CD14-positive monocyte (primary cell): ENCODE measurements at regions of chr18 and their contacts with region 1.

Region 1: DNA sequence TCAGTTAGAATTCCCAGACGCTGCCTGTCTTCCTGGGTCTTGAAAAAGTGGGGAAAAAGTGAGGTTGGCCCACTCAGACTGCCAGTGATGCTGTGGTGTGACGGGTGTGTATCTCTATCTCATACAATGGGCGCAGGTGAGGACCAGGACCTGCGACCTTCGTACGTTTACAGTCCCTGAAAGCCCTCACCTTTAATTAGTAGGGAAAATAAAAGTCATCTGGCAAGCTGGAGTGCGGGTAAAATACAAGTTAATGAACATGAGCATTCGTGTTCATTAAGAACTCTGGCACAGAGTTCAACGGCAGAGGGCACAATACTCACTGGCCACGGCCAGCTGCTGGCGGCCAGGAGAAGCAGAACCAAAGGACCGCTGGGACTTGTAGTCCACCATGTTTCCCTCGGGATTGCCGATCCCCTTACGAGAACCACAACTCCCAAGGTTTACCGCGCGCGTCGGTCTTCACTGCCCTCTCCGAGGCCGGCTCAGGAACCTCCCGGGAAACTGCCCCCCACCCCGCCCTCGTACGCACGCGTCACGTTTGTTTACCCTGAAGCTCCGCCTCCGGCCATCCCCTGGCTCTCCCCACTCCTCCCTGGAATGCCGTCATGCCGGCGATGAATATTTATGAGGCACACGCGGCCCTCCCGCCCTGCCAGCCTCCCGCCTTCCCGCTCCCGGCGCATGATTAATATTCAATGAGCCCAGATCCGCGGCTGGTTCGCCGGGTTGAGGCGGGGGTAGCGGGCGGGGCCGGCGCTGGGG is 488 bp upstream of the PHLPP1 start:
- DNase-seq: peak; percentile 100
- H3K4me3 ChIP-seq: peak overlapping the region; percentile 68 to 78 (median 73)
- H3K4me3 Mint-ChIP-seq: peak overlapping the region; percentile 78 to 84
- H3K27ac ChIP-seq: peak overlapping the region; percentile 70 to 71
- H3K27ac Mint-ChIP-seq: peak overlapping the region; percentile 76 to 97 (median 91)
- H3K4me1 ChIP-seq: peaks cover 15 to 36% of the 10 kb centered on the region in 2 donors
- H3K4me1 Mint-ChIP-seq: peaks cover 33% of the 10 kb centered on the region
- H3K27me3 ChIP-seq: no peaks in the 10 kb centered on the region
- H3K27me3 Mint-ChIP-seq: peaks cover 0 to 5% (median 1%) of the 10 kb centered on the region in 3 donors
- CTCF ChIP-seq: peak; percentile 63

Region 2: GRCh38 chr18:62576845-62577512 is 137.9 kb before region 1 on chr18:
- intact Hi-C with region 1: no loop called
- DNase-seq: no peak
- H3K4me3 ChIP-seq: peak overlapping the region in 1 of 3 experiments; percentile 46
- H3K4me3 Mint-ChIP-seq: peak overlapping the region; percentile 49 to 76
- H3K27ac ChIP-seq: peak overlapping the region; percentile 42 to 71
- H3K27ac Mint-ChIP-seq: peak overlapping the region; percentile 39 to 89 (median 66)
- H3K4me1 ChIP-seq: peaks cover 10 to 13% of the 10 kb centered on the region in 2 donors
- H3K4me1 Mint-ChIP-seq: peaks cover 14% of the 10 kb centered on the region
- H3K27me3 ChIP-seq: no peaks in the 10 kb centered on the region
- H3K27me3 Mint-ChIP-seq: no peaks in the 10 kb centered on the region
- CTCF ChIP-seq: no peak

Region 3: DNA sequence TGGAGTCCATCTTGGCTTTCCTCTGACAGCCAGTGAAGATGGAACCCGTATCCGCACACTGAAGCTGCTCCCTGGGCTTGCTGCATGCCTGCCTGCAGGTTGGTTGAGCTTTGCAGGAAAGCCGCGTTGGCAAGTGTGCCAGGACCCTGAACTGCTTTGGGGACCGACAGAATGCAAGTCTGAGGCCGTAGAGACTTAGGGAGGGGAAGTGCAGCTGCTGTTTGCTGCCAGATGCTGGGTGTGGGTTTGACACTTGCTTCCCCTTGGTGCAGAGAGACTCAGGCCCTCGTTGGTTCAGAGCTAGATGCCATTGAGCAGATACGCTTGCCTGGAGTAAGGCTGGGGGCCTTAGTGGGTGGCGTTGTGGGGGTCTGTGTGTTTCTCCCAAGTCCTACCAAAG is 12.6 kb before region 1 on chr18:
- intact Hi-C with region 1: no loop called
- DNase-seq: peak in 1 of 3 donors; percentile 16
- H3K4me3 ChIP-seq: peak overlapping the region in 1 of 3 experiments; percentile 32
- H3K4me3 Mint-ChIP-seq: peak overlapping the region in 1 of 2 donors; percentile 64
- H3K27ac ChIP-seq: no peak overlapping the region
- H3K27ac Mint-ChIP-seq: peak overlapping the region in 2 of 7 donors; percentile 18 to 32
- H3K4me1 ChIP-seq: peaks cover 8 to 12% of the 10 kb centered on the region in 2 donors
- H3K4me1 Mint-ChIP-seq: peaks cover 14% of the 10 kb centered on the region
- H3K27me3 ChIP-seq: no peaks in the 10 kb centered on the region
- H3K27me3 Mint-ChIP-seq: peaks cover 0 to 3% (median 1%) of the 10 kb centered on the region in 3 donors
- CTCF ChIP-seq: no peak

Region 4: DNA sequence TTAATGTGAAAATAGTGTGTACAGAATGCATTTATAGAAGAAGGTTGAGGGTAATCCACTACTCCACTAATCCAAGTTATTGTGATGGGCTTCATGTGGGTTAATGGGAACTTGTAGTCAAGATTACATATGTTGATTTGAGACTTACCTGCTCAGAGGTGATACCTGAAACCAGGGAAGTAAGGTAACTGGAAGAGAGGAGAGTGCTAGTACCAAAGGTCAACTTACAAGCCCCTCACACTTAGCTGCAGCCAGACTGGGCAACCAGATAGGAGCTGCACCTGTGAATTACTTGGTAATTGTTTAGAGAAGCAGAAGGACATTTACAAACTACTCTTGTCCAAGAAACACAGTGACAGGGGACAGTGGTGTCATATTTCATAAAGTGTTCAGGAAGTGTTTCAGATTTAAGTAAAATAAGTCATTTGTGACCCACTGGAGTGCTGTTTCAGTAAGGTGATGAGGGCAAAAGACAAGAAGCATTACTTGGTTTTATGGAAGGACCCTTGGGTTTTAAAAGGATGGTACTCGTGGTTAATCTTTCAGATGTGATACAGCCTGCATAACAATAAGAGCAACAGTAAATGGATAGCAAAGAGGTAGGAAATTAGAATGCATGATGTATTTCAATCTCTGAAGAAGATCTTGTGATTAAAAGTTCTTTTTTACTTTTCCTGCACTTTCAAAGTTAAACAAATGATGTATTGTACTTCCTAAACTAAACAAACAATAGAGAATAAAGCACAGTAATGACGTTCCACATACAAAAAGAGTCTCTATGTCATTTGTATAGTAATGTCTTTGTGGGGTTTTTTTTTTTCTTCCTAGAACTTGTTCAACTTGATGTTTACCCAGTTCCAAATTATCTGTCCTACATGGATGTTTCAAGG is 189.8 kb after region 1 on chr18:
- intact Hi-C with region 1: no loop called
- DNase-seq: no peak
- H3K4me3 ChIP-seq: no peak overlapping the region
- H3K4me3 Mint-ChIP-seq: no peak overlapping the region
- H3K27ac ChIP-seq: no peak overlapping the region
- H3K27ac Mint-ChIP-seq: no peak overlapping the region
- H3K4me1 ChIP-seq: no peaks in the 10 kb centered on the region
- H3K4me1 Mint-ChIP-seq: no peaks in the 10 kb centered on the region
- H3K27me3 ChIP-seq: no peaks in the 10 kb centered on the region
- H3K27me3 Mint-ChIP-seq: no peaks in the 10 kb centered on the region
- CTCF ChIP-seq: no peak

Region 5: DNA sequence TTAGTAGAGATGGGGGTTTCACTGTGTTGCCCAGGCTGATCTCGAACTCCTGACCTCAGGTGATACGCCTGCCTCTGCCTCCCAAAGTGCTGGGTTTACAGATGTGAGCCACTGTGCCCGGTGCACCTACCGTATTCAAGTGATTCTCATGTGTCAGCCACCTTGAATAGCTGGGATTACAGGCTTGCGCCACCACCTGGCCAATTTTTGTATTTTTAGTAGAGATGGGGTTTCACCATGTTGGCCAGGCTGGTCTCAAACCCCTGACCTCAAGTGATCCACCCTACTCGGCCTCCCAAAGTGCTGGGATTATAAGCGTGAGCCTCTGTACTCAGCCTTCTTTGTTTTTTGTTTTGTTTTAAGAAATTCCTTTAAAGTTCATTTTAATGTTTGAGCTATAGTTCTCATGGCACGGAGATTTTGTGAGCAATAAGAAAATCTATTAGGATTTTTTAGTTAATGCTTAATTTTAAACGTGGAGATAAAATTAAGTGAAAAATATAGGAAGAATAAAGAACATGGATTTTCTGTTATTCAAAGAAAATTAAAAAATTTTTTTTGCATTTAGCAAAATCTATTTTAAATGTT is 243.1 kb after region 1 on chr18:
- intact Hi-C with region 1: loop called (anchors 5 kb)
- DNase-seq: peak in 2 of 3 donors; percentile 50 to 52
- H3K4me3 ChIP-seq: no peak overlapping the region
- H3K4me3 Mint-ChIP-seq: no peak overlapping the region
- H3K27ac ChIP-seq: no peak overlapping the region
- H3K27ac Mint-ChIP-seq: peak overlapping the region in 1 of 7 donors; percentile 47
- H3K4me1 ChIP-seq: peaks cover 2 to 5% of the 10 kb centered on the region in 2 donors
- H3K4me1 Mint-ChIP-seq: peaks cover 9% of the 10 kb centered on the region
- H3K27me3 ChIP-seq: no peaks in the 10 kb centered on the region
- H3K27me3 Mint-ChIP-seq: peaks cover 0 to 2% (median 0%) of the 10 kb centered on the region in 3 donors
- CTCF ChIP-seq: peak; percentile 60

Region 6: GRCh38 chr18:62982600-62983251 is 267.9 kb after region 1 on chr18:
- intact Hi-C with region 1: loop called in 1 of 2 experiments (anchors 10 kb)
- DNase-seq: peak; percentile 15 to 47 (median 46)
- H3K4me3 ChIP-seq: peak overlapping the region; percentile 45 to 90 (median 78)
- H3K4me3 Mint-ChIP-seq: peak overlapping the region; percentile 86 to 97
- H3K27ac ChIP-seq: peak overlapping the region in 1 of 2 donors; percentile 51
- H3K27ac Mint-ChIP-seq: peak overlapping the region in 5 of 7 donors; percentile 37 to 82 (median 81)
- H3K4me1 ChIP-seq: peaks cover 34 to 40% of the 10 kb centered on the region in 2 donors
- H3K4me1 Mint-ChIP-seq: peaks cover 46% of the 10 kb centered on the region
- H3K27me3 ChIP-seq: no peaks in the 10 kb centered on the region
- H3K27me3 Mint-ChIP-seq: no peaks in the 10 kb centered on the region
- CTCF ChIP-seq: peak; percentile 77

Region 7: DNA sequence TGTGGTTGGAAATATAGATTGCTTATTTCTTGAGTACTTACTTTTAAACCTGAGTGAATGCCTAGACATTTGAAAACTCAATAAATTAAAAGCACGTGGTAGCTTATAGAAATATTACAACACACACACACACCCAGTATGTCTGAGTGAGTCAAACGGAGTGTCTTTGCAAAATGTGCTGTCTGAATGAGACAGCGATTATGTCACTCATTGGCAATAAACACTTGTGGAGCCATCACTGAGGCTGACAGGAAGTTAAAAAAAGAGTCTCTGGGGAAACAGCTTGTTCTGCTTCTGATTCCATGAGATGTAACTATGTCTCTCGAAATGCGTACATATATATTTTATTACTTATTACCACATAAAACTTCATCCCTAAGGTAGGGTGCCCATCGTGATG is 729.7 kb after region 1 on chr18:
- intact Hi-C with region 1: loop called in 1 of 2 experiments (anchors 10 kb)
- DNase-seq: peak; percentile 94 to 99 (median 97)
- H3K4me3 ChIP-seq: peak overlapping the region in 1 of 3 experiments; percentile 11
- H3K4me3 Mint-ChIP-seq: no peak overlapping the region
- H3K27ac ChIP-seq: peak overlapping the region; percentile 92 to 95
- H3K27ac Mint-ChIP-seq: peak overlapping the region; percentile 96 to 98 (median 97)
- H3K4me1 ChIP-seq: peaks cover 39 to 44% of the 10 kb centered on the region in 2 donors
- H3K4me1 Mint-ChIP-seq: peaks cover 37% of the 10 kb centered on the region
- H3K27me3 ChIP-seq: no peaks in the 10 kb centered on the region
- H3K27me3 Mint-ChIP-seq: peaks cover 0 to 2% (median 0%) of the 10 kb centered on the region in 3 donors
- CTCF ChIP-seq: no peak